CD4-positive, alpha-beta T cell (primary cell): ENCODE measurements at regions of chr16 and their contacts with region 1.

Region 1: DNA sequence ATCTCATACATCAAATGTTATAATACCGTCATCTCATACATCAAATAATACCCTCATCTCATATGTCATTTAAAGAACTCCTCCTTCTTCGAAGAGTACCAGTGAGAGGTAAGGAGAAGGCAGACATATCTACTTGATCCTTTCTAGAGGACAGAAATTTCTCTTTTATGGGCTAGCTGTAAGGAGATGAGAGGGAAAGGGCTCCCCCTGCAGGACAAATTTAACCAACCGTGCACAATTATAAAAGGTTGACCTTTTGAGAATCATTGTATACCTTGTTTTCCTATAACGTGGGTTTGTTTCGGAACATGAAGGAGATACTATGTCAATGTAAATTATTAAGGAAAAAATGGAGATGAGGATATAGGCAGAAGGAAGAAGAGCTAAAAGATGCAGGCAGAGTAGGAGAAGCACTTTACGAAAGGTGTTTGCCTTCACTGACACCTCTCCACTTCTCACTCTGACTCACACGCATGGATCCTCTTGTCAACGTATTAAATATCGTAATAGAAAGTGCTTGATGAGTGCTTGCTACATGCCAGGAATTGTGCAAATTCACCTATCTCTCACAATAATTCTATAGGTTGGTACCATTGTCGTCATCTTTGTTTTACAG is 465.9 kb upstream of the ERCC4 start:
- DNase-seq: peak in 3 of 14 experiments; percentile 1 to 32 (median 16)
- ATAC-seq: no peak
- H3K4me3 ChIP-seq: no peak overlapping the region
- H3K4me3 Mint-ChIP-seq: no peak overlapping the region
- H3K27ac ChIP-seq: no peak overlapping the region
- H3K27ac Mint-ChIP-seq: no peak overlapping the region
- H3K4me1 ChIP-seq: no peaks in the 10 kb centered on the region
- H3K4me1 Mint-ChIP-seq: no peaks in the 10 kb centered on the region
- H3K27me3 ChIP-seq: no peaks in the 10 kb centered on the region
- H3K27me3 Mint-ChIP-seq: no peaks in the 10 kb centered on the region
- CTCF ChIP-seq: peak; percentile 33

Region 2: DNA sequence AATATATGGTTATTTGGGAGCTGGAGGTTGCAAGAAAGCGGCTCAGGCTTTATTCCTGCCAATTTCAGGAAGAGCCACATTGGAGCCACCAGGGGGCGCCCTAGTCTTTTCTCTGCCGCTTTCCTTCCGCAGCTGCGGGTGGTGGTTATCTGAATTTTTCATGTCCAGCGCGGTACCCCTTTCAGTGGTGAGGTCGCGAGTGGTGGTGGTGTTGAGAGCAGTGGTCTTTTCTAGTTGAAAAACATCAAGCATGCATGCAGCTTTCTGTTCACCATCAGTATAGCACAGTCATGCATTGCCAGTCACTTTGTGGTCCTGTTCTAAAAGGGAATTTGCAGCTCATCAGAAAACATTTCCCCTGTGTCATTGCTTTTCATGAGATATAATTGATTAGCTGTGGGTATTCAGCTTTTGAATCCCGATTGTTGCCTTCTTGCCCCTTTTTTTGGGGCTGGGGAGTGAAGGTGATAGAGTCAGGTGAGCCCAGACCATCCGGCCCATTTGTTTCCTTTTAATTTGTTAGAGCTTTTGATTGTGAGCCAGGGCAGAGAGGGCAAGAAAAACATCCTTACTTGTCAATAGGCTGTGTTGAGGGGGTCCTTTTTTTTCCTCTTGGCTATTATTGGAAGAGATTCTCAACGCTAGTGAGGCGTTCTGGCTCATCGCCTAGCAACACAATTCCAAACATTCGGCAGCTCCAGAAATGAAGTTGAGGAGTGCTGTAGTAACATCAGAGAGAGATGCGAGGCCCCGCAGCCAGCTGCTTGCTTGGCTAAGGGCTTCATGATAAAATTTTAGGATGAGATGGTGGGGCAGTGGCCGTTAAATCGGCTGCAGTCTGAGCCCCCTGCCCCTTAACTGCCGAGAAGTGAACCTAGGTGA is 1358.5 kb before region 1 on chr16:
- CTCF ChIA-PET with region 1: no interaction called
- POLR2A ChIA-PET with region 1: no interaction called
- intact Hi-C with region 1: loop called (anchors 5 to 10 kb)
- DNase-seq: peak; percentile 48 to 83 (median 60)
- ATAC-seq: peak; percentile 54
- H3K4me3 ChIP-seq: no peak overlapping the region
- H3K4me3 Mint-ChIP-seq: peak overlapping the region; percentile 77
- H3K27ac ChIP-seq: no peak overlapping the region
- H3K27ac Mint-ChIP-seq: no peak overlapping the region
- H3K4me1 ChIP-seq: peaks cover 14% of the 10 kb centered on the region
- H3K4me1 Mint-ChIP-seq: peaks cover 50% of the 10 kb centered on the region
- H3K27me3 ChIP-seq: no peaks in the 10 kb centered on the region
- H3K27me3 Mint-ChIP-seq: no peaks in the 10 kb centered on the region
- CTCF ChIP-seq: peak; percentile 94

Region 3: DNA sequence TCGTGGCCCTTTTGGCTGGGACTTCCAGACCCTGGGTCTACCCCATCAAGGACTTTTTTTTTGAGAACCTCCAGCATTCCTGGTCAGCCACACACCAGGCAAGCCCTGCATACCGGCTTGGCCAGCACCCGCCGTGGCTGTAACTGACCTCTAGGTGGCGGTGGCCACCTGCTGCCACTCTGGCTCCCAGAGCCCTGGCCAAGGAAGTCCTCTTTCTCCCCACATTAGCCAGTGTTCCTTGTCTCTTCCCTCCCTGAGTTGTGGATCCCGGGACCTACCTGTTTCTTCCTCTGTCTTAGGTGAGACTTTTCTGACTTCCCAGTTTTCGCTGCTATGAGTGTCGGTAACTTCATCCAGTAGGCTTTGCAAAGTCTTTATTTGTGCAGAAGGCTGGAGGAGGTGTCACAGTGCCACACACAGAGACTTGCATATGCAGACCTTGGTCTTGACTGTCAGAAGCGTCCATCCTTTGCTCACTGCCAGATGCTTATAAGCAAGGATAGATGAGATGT is 998.7 kb before region 1 on chr16:
- CTCF ChIA-PET with region 1: no interaction called
- POLR2A ChIA-PET with region 1: no interaction called
- intact Hi-C with region 1: loop called in 1 of 2 experiments (anchors 5 kb)
- DNase-seq: peak in 10 of 14 experiments; percentile 2 to 52 (median 23)
- ATAC-seq: no peak
- H3K4me3 ChIP-seq: no peak overlapping the region
- H3K4me3 Mint-ChIP-seq: no peak overlapping the region
- H3K27ac ChIP-seq: no peak overlapping the region
- H3K27ac Mint-ChIP-seq: no peak overlapping the region
- H3K4me1 ChIP-seq: peaks cover 13% of the 10 kb centered on the region
- H3K4me1 Mint-ChIP-seq: peaks cover 32% of the 10 kb centered on the region
- H3K27me3 ChIP-seq: no peaks in the 10 kb centered on the region
- H3K27me3 Mint-ChIP-seq: no peaks in the 10 kb centered on the region
- CTCF ChIP-seq: peak; percentile 39